Heart left ventricle (tissue), 16 donors: ENCODE measurements at regions of chr16 and their contacts with region 1.

Region 1: GRCh38 chr16:70770626-70771552 is 30.1 kb downstream of the VAC14 start:
- DNase-seq: peak in 2 of 5 donors; percentile 35 to 50
- ATAC-seq: peak in 3 of 4 donors; percentile 55 to 80 (median 69)
- H3K4me3 ChIP-seq: no peak overlapping the region
- H3K27ac ChIP-seq: no peak overlapping the region
- H3K4me1 ChIP-seq: peaks cover 0 to 5% (median 0%) of the 10 kb centered on the region in 12 donors
- H3K27me3 ChIP-seq: no peaks in the 10 kb centered on the region
- CTCF ChIP-seq: peak; percentile 89 to 99 (median 95)
- POLR2A ChIP-seq: no peak

Region 2: DNA sequence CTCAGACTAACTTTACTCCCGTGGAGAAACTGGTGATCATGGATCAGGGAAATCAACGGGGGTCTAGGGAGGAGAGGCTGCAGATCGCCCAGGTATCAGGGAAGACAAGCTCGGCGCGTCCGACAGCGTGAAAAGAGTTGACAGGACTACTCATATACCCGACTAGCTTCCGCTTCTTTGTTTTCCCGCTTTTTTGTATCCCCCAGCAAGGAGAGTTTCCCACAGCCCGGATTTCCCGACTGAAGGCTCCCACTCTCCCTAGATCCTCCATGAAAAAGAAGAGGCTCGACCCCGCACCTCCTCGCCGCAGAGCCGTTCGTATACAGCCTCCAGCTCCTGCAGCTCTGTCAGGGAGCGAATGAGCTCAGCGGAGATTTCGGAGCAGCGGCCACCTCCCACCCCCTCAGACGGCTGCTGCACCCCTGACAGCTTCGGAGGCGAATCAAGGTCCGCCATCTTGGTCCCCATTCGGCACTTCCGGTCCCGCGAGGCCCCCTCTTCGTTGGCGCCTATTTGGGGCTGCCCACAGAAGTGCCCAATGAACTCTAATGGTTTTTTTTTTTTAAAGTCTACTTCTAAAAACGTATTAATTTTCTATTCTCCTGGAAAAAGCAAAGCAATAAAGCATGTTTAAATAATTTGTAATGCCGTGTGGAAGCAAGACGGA is 247.7 kb before region 1 on chr16 and contains the start of gene COG4:
- intact Hi-C with region 1: loop called in 4 of 10 experiments (anchors 2 to 10 kb)
- DNase-seq: peak; percentile 87 to 93 (median 90)
- ATAC-seq: peak; percentile 85 to 95 (median 92)
- H3K4me3 ChIP-seq: peak within 1 kb of the TSS; percentile 58 to 99 (median 84)
- H3K27ac ChIP-seq: peak within 1 kb of the TSS; percentile 67 to 94 (median 87)
- H3K4me1 ChIP-seq: peaks cover 3 to 61% (median 34%) of the 10 kb centered on the region in 12 donors
- H3K27me3 ChIP-seq: no peaks in the 10 kb centered on the region
- CTCF ChIP-seq: no peak
- POLR2A ChIP-seq: no peak
- total RNA-seq, gene COG4: 30.7 to 45.7 (median 41.7) TPM

Region 3: GRCh38 chr16:70529051-70529777 is 241.7 kb before region 1 on chr16:
- intact Hi-C with region 1: loop called in 6 of 10 experiments (anchors 2 to 10 kb)
- DNase-seq: no peak
- ATAC-seq: no peak
- H3K4me3 ChIP-seq: no peak overlapping the region
- H3K27ac ChIP-seq: no peak overlapping the region
- H3K4me1 ChIP-seq: peaks cover 3 to 52% (median 35%) of the 10 kb centered on the region in 12 donors
- H3K27me3 ChIP-seq: no peaks in the 10 kb centered on the region
- CTCF ChIP-seq: peak; percentile 35 to 71 (median 53)
- POLR2A ChIP-seq: no peak

Region 4: GRCh38 chr16:70534971-70535370 is 235.9 kb before region 1 on chr16:
- intact Hi-C with region 1: loop called in 3 of 10 experiments (anchors 10 kb)
- DNase-seq: no peak
- ATAC-seq: no peak
- H3K4me3 ChIP-seq: no peak overlapping the region
- H3K27ac ChIP-seq: no peak overlapping the region
- H3K4me1 ChIP-seq: peaks cover 0 to 10% (median 0%) of the 10 kb centered on the region in 12 donors
- H3K27me3 ChIP-seq: no peaks in the 10 kb centered on the region
- CTCF ChIP-seq: no peak
- POLR2A ChIP-seq: no peak

Region 5: DNA sequence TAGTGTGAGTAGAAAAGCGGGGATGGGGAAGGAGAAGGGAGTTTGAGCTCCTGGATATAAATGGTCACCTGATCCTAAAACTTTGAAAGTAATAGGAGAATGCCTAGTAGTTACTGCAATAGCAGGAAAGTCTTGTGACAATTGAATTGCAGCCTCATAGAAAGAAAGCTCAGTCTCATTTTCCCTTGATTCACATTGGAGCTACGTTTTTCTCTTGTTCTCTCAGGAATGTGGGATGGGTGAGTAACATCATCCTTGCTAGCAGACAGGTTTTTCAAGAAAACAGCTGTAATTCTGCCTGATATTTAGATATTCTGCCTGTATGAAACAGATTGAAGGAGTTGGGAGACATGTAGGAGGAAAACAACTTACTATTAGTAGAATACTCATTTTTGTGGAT is 222.0 kb before region 1 on chr16:
- intact Hi-C with region 1: loop called in 1 of 10 experiments (anchors 10 kb)
- DNase-seq: no peak
- ATAC-seq: no peak
- H3K4me3 ChIP-seq: no peak overlapping the region
- H3K27ac ChIP-seq: no peak overlapping the region
- H3K4me1 ChIP-seq: peaks cover 0 to 15% (median 0%) of the 10 kb centered on the region in 12 donors
- H3K27me3 ChIP-seq: no peaks in the 10 kb centered on the region
- CTCF ChIP-seq: no peak
- POLR2A ChIP-seq: no peak

Region 6: GRCh38 chr16:70679666-70680494 is 91.0 kb before region 1 on chr16:
- intact Hi-C with region 1: loop called (anchors 2 to 5 kb)
- DNase-seq: peak in 3 of 5 donors; percentile 28 to 71 (median 38)
- ATAC-seq: peak in 2 of 4 donors; percentile 21 to 54
- H3K4me3 ChIP-seq: peak overlapping the region in 2 of 12 donors; percentile 7
- H3K27ac ChIP-seq: peak overlapping the region in 6 of 12 donors; percentile 42 to 92 (median 46)
- H3K4me1 ChIP-seq: peaks cover 0 to 70% (median 42%) of the 10 kb centered on the region in 12 donors
- H3K27me3 ChIP-seq: peaks cover 0 to 4% (median 0%) of the 10 kb centered on the region in 9 donors
- CTCF ChIP-seq: peak in 11 of 12 donors; percentile 26 to 78 (median 57)
- POLR2A ChIP-seq: no peak

Region 7: GRCh38 chr16:70809396-70810060 is 38.6 kb after region 1 on chr16:
- intact Hi-C with region 1: no loop called
- DNase-seq: no peak
- ATAC-seq: no peak
- H3K4me3 ChIP-seq: no peak overlapping the region
- H3K27ac ChIP-seq: no peak overlapping the region
- H3K4me1 ChIP-seq: no peaks in the 10 kb centered on the region
- H3K27me3 ChIP-seq: peaks cover 0 to 36% (median 4%) of the 10 kb centered on the region in 9 donors
- CTCF ChIP-seq: no peak
- POLR2A ChIP-seq: no peak

Region 8: GRCh38 chr16:71552698-71553451 is 782.0 kb after region 1 on chr16:
- intact Hi-C with region 1: no loop called
- DNase-seq: no peak
- ATAC-seq: no peak
- H3K4me3 ChIP-seq: no peak overlapping the region
- H3K27ac ChIP-seq: no peak overlapping the region
- H3K4me1 ChIP-seq: no peaks in the 10 kb centered on the region
- H3K27me3 ChIP-seq: peaks cover 0 to 8% (median 0%) of the 10 kb centered on the region in 9 donors
- CTCF ChIP-seq: no peak
- POLR2A ChIP-seq: no peak